MCF 10A (cell line): ENCODE measurements at regions of chr1 and their contacts with region 1.

Region 1: DNA sequence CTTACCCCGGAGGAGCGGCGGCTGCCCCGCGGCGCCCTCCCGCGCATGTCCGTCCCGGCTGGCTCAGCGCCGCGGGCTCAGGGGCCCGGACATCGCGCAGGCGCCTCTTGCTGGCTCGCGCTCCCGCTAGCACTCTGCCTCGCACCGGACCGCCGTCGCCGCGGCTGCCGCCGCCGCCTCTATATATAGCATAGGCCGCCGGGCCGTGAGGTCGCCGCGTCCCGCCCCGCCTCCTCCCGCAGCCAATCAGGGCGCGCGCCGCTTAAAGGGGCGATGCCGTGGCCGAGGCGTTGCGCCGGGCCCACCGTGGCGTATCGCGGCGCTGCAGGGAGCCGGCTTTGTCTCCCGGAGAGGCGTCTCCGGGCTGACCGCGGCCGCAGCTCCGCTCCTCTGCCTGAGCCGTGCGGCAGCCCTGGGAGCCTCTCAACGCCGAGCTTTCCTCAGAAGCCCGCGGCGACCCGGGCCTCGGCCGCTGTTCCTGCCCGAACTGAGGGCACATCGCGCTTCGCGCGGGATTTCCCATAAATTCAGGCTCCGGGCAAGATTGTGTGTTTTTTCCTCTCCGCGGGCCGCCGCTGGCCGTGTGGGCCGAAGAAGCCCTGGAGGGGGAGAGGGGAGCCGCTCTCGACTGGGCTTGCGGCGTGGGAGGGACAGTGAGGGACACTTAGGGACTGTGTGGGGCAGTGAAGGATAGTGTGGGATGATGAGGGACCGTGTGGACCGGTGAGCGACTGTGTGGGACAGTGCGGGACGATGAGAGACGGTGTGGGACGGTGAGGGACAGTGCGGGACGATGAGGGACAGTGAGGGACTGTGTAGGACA is at the start of gene ERRFI1:
- DNase-seq: peak; percentile 93
- H3K4me3 Mint-ChIP-seq: peak within 1 kb of the TSS; percentile 88
- H3K27ac Mint-ChIP-seq: peak within 1 kb of the TSS; percentile 93
- H3K4me1 Mint-ChIP-seq: peaks cover 39% of the 10 kb centered on the region
- H3K27me3 Mint-ChIP-seq: no peaks in the 10 kb centered on the region
- CTCF ChIP-seq: no peak
- total RNA-seq, gene ERRFI1: 86.4 and 111 TPM in 2 replicates

Region 2: DNA sequence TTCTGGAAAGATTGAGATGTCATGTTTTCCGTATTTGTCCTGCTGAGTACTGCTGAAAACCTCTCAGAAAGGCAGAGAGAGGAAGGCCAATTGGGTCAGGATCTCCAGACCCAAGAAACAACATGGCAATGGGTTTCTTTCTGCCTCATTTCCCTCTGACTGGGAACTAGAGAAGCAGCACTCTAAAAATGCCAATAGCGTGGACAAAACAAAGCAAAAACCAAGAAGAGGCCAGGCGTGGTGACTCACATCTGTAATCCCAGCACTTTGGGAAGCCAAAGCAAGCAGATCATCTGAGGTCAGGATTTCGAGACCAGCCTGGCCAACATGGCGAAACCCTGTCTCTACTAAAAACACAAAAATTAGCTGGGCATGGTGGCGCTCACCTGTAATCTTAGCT is 104.1 kb before region 1 on chr1:
- CTCF ChIA-PET with region 1: no interaction called
- POLR2A ChIA-PET with region 1: no interaction called
- intact Hi-C with region 1: no loop called
- DNase-seq: no peak
- H3K4me3 Mint-ChIP-seq: no peak overlapping the region
- H3K27ac Mint-ChIP-seq: no peak overlapping the region
- H3K4me1 Mint-ChIP-seq: no peaks in the 10 kb centered on the region
- H3K27me3 Mint-ChIP-seq: peaks cover 18% of the 10 kb centered on the region
- CTCF ChIP-seq: no peak

Region 3: DNA sequence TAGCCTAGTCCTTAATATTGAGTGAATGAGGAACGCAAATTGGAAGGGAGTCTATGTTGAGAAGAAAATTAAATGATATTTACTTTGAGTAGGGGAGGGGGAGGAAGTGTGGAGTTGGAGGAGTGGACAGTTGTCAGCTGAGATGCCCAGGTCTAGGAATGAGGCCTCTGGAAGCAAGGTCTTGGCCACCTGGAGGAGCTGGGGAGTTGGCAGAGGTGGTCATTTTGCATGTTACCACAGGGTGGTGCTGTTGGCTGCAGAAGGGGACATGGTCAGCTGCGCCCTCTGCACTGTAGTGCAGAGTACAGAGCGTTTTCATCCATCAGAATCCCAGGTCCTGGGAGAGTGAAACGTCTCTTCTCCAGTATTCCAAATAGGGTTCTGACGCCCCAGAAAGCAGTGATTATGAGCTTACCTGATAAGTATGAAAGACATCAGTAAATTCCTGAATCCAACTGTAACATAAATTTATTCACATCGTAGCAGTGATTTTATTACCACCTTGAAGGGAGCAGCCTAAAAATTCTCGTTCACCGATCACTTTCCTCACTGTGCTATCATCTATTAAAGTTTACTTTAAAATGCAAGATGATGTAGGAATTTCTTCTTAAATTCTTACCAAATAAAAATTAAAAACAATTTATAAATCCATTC is 51.0 kb before region 1 on chr1:
- CTCF ChIA-PET with region 1: interaction called, 22 read pairs
- POLR2A ChIA-PET with region 1: interaction called, 7 read pairs
- intact Hi-C with region 1: no loop called
- DNase-seq: peak; percentile 87
- H3K4me3 Mint-ChIP-seq: no peak overlapping the region
- H3K27ac Mint-ChIP-seq: no peak overlapping the region
- H3K4me1 Mint-ChIP-seq: no peaks in the 10 kb centered on the region
- H3K27me3 Mint-ChIP-seq: no peaks in the 10 kb centered on the region
- CTCF ChIP-seq: peak; percentile 95

Region 4: GRCh38 chr1:7993593-7994479 is 32.5 kb before region 1 on chr1:
- CTCF ChIA-PET with region 1: no interaction called
- POLR2A ChIA-PET with region 1: no interaction called
- intact Hi-C with region 1: no loop called
- DNase-seq: no peak
- H3K4me3 Mint-ChIP-seq: no peak overlapping the region
- H3K27ac Mint-ChIP-seq: no peak overlapping the region
- H3K4me1 Mint-ChIP-seq: peaks cover 18% of the 10 kb centered on the region
- H3K27me3 Mint-ChIP-seq: no peaks in the 10 kb centered on the region
- CTCF ChIP-seq: no peak

Region 5: DNA sequence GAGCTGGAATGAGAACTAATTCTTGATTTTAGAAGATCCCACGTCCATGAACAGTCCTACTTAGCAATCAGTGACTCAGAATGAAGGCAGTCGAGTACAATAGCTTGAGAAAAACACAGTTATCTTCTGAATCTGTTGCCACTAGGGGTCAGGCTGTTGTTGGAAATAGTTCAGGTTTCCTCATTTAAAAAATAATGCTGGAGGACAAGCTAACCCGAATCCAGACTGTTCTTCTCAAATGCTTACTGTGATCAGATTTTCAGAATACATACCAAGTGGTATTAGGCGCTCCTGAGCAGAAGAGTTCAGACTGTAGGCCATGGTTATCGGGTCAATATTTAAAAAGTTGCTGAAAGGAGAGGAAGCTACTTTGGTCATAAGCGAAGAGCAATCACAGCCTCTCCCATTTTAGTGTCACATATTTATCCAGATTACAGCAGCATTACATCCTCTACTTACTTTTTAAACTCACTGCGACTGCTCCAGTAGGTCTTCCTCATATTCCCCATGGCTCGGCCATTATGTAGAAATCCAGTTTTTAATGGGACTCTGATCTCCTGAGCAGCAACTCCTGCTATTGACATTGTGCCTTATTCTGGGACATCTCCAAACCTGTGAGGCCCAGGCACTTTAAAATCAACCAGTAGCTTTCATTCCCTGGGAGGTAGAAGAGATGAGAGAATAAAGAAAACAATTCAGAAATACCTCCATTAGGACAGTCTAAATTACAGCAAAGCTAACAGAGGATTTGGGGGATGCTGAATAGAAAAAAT is 11.1 kb before region 1 on chr1:
- CTCF ChIA-PET with region 1: interaction called, 16 read pairs
- POLR2A ChIA-PET with region 1: interaction called, 256 read pairs
- intact Hi-C with region 1: no loop called
- DNase-seq: peak; percentile 82
- H3K4me3 Mint-ChIP-seq: peak overlapping the region; percentile 88
- H3K27ac Mint-ChIP-seq: peak overlapping the region; percentile 82
- H3K4me1 Mint-ChIP-seq: peaks cover 73% of the 10 kb centered on the region
- H3K27me3 Mint-ChIP-seq: no peaks in the 10 kb centered on the region
- CTCF ChIP-seq: peak; percentile 64

Region 6: DNA sequence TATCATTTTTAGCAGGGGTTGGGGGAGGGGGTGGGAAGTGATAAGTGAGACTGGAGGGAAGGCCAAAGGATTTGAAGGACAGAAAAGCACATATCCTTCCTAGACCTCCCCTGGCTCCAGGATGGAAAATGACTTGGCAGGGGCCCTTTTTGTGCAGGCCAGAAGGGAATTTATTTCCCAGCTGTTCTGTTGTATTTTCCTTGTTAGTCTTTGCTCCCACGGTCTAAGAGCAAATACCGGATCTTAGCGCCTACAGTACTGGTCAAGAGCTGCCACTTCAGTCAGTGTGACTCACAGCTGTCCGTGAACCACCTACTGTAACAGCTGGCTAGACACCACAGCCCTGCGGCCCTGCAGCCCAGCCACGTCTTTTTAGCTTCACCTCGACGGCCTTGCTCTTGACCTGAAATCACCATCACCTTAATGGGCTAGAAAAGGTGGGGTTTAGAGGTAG is 50.8 kb after region 1 on chr1:
- CTCF ChIA-PET with region 1: interaction called, 3 read pairs
- POLR2A ChIA-PET with region 1: interaction called, 103 read pairs
- intact Hi-C with region 1: no loop called
- DNase-seq: peak; percentile 91
- H3K4me3 Mint-ChIP-seq: no peak overlapping the region
- H3K27ac Mint-ChIP-seq: peak overlapping the region; percentile 89
- H3K4me1 Mint-ChIP-seq: peaks cover 59% of the 10 kb centered on the region
- H3K27me3 Mint-ChIP-seq: no peaks in the 10 kb centered on the region
- CTCF ChIP-seq: no peak

Region 7: GRCh38 chr1:8137481-8138244 is 111.3 kb after region 1 on chr1:
- CTCF ChIA-PET with region 1: interaction called, 3 read pairs
- POLR2A ChIA-PET with region 1: interaction called, 11 read pairs
- intact Hi-C with region 1: no loop called
- DNase-seq: peak; percentile 85
- H3K4me3 Mint-ChIP-seq: peak overlapping the region; percentile 55
- H3K27ac Mint-ChIP-seq: peak overlapping the region; percentile 93
- H3K4me1 Mint-ChIP-seq: peaks cover 44% of the 10 kb centered on the region
- H3K27me3 Mint-ChIP-seq: no peaks in the 10 kb centered on the region
- CTCF ChIP-seq: no peak

Region 8: GRCh38 chr1:8238851-8239305 is 212.5 kb after region 1 on chr1:
- CTCF ChIA-PET with region 1: interaction called, 38 read pairs
- POLR2A ChIA-PET with region 1: interaction called, 7 read pairs
- intact Hi-C with region 1: loop called (anchors 1 kb)
- DNase-seq: peak; percentile 88
- H3K4me3 Mint-ChIP-seq: no peak overlapping the region
- H3K27ac Mint-ChIP-seq: peak overlapping the region; percentile 86
- H3K4me1 Mint-ChIP-seq: peaks cover 14% of the 10 kb centered on the region
- H3K27me3 Mint-ChIP-seq: no peaks in the 10 kb centered on the region
- CTCF ChIP-seq: peak; percentile 37